HepG2 (cell line): ENCODE measurements at regions of chr15 and their contacts with region 1.

Region 1: DNA sequence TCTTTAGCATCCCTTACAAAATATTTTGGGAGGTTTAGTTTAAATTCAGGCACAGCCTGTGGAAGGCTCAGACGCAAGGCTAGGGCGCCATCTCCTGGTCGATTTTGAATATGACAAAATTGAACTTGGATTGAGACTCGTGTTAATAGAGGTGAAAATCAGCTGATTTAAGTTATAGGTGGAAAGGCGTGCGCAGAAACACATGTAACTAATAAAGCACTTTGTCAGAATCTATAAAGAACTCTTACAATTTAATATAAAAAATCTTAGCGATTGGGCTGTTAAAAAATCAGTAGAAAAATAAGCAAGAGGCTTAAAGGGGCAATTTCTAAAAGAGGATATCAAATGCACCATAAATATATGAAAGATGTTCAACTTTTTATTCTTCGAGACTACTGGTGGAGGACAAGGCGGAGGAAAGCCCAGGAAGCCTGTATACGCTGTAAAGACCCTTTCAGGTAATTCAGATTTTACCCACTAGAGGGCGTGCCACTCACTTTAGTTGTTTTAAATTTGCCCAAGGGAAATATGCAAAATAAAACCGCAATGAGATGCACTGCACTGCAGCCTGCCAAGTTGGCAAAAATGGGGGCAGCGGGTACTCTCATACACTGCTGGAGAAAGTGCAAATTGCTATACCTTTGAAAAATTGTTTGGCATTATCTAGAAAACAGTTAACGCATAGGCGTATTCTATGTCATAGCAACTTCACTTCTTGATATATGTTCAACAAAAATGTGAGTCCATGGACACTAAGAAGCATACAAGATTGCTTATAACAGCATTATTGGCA is 64.7 kb downstream of the SLC30A4 start:
- DNase-seq: peak; percentile 77
- ATAC-seq: peak; percentile 72
- H3K4me3 ChIP-seq: peak overlapping the region; percentile 46 to 67 (median 61)
- H3K27ac ChIP-seq: peak overlapping the region; percentile 25
- H3K4me1 ChIP-seq: peaks cover 37% of the 10 kb centered on the region
- H3K27me3 ChIP-seq: peaks cover 5 to 24% of the 10 kb centered on the region in 2 experiments; a peak in 4 of 5 replicates
- CTCF ChIP-seq: peak; percentile 70
- EP300 ChIP-seq: no peak
- POLR2A ChIP-seq: no peak
- RAD21 ChIP-seq: peak; percentile 58

Region 2: DNA sequence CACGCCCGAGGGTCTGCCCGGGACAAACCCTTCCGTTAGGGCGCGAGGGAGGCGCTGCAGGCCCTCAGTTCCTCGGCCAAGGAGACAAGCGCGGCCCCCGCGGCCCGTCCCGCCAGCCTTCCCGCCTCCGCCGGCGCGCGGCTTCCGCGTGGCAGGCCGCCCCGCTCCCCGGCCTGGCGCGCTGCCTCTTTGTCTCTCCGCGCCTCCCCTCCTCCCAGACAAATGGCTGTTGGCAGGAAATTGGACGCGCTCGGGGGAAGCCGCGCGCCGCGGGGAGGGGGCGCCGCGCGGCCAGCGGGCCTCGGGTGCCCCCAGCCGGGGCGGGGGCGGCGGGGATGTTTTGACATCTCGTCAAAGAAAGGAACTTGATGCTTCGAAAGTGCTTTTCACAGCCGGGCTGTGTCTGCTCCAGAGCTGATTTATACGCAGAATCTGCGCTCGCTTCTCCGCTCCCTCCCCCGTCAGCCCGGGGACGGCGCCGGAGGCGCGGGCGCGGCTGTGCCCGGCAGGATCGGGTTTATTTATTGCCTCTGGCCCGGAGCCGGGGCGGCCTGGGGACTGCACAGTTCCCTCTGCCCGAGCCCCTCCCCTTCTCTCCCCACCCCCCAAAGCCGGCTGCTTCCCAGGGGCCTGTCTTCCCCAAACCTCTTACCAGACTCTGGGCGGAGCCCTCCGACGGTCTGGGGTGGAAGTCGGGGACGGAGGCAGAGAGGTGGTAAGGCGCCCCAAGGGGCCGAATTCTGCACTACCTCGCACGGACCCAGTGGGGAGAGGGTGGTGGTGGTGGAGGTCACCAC is 290.8 kb before region 1 on chr15:
- CTCF ChIA-PET with region 1: interaction called, 16 read pairs
- POLR2A ChIA-PET with region 1: no interaction called
- in situ Hi-C with region 1: no loop called
- intact Hi-C with region 1: loop called (anchors 5 kb)
- DNase-seq: peak; percentile 62
- ATAC-seq: peak; percentile 76
- H3K4me3 ChIP-seq: peak overlapping the region; percentile 69 to 76 (median 75)
- H3K27ac ChIP-seq: peak overlapping the region; percentile 76
- H3K4me1 ChIP-seq: peaks cover 41% of the 10 kb centered on the region
- H3K27me3 ChIP-seq: no peaks in the 10 kb centered on the region
- CTCF ChIP-seq: peak; percentile 68
- EP300 ChIP-seq: no peak
- POLR2A ChIP-seq: peak; percentile 30 to 34; a peak in 3 of 4 replicates
- RAD21 ChIP-seq: no peak

Region 3: DNA sequence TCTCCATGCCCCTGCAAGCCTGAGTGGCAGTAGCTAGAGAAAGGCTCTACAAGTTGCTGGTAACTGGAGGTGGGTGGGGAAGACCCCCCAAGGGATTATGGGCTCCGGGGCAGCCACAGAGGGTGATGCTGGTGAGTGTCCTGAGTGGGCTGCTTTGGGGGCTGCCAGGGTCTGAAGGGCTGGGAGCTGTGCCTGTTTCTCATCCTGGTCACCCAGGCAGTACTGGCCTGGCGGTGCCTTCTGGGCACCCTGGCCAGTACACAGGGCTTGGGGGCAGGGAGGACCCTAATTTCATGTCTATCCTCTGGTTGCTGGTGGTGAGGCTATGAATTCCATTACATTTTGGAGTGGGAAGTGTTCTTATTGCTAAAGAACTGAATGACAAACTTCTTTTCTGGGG is 33.4 kb before region 1 on chr15:
- CTCF ChIA-PET with region 1: interaction called, 195 read pairs
- POLR2A ChIA-PET with region 1: no interaction called
- in situ Hi-C with region 1: no loop called
- intact Hi-C with region 1: loop called (anchors 5 kb)
- DNase-seq: no peak
- ATAC-seq: peak; percentile 51
- H3K4me3 ChIP-seq: no peak overlapping the region
- H3K27ac ChIP-seq: no peak overlapping the region
- H3K4me1 ChIP-seq: peaks cover 12% of the 10 kb centered on the region
- H3K27me3 ChIP-seq: no peaks in the 10 kb centered on the region
- CTCF ChIP-seq: no peak
- EP300 ChIP-seq: no peak
- POLR2A ChIP-seq: no peak
- RAD21 ChIP-seq: no peak

Region 4: DNA sequence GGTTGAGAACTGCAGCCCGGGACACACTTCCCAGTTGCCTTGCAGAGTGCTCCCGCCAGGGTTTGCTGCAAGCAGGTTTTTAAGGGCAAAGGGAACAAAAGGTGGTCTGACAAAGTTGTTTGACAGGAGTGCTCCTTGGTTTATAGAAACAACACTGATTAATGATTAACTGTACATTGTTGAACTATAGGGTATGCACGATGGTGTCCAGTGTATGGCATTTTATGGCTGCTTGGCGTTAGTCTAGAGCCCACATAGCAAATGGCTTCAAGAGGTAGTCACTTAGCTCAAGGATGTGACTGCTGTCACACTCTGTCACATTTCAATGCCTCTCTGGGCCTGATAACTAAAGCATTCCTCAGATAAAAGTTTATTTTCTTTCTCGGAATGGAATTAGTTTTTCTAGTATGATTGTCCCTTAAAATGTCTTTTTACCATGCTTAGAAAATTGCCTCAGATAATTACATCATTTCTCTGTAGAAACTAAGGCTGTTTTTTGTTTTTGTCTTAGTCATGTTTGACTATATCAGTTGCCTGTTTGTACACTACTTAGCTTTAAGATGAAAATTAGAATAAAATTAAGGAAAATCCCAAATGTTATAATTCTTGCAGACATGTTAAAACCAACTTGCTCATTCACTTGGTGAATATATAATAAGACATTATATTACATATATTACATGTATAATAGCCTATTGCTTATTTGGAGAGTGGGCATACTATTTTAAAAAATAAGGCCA is 18.1 kb before region 1 on chr15:
- CTCF ChIA-PET with region 1: interaction called, 10 read pairs
- POLR2A ChIA-PET with region 1: no interaction called
- in situ Hi-C with region 1: no loop called
- intact Hi-C with region 1: loop called (anchors 1 kb)
- DNase-seq: peak; percentile 79
- ATAC-seq: peak; percentile 92
- H3K4me3 ChIP-seq: peak overlapping the region in 1 of 3 experiments; percentile 34; a peak in 1 of 6 replicates
- H3K27ac ChIP-seq: no peak overlapping the region
- H3K4me1 ChIP-seq: peaks cover 44% of the 10 kb centered on the region
- H3K27me3 ChIP-seq: peaks cover 0 to 2% of the 10 kb centered on the region in 2 experiments; a peak in 1 of 5 replicates
- CTCF ChIP-seq: peak; percentile 43; the same call in 1 of the 2 replicates
- EP300 ChIP-seq: no peak
- POLR2A ChIP-seq: no peak
- RAD21 ChIP-seq: no peak

Region 5: GRCh38 chr15:45611305-45611704 is 153.5 kb after region 1 on chr15:
- CTCF ChIA-PET with region 1: interaction called, 24 read pairs
- POLR2A ChIA-PET with region 1: no interaction called
- in situ Hi-C with region 1: loop called (anchors 10 kb)
- intact Hi-C with region 1: loop called (anchors 1 kb)
- DNase-seq: peak; percentile 12
- ATAC-seq: no peak
- H3K4me3 ChIP-seq: no peak overlapping the region
- H3K27ac ChIP-seq: no peak overlapping the region
- H3K4me1 ChIP-seq: no peaks in the 10 kb centered on the region; the same call in 1 of the 2 replicates
- H3K27me3 ChIP-seq: no peaks in the 10 kb centered on the region
- CTCF ChIP-seq: peak; percentile 37
- EP300 ChIP-seq: no peak
- POLR2A ChIP-seq: no peak
- RAD21 ChIP-seq: no peak